Cardiac septum (tissue), 1 donor: ENCODE measurements at regions of chrX and their contacts with region 1.

Region 1: DNA sequence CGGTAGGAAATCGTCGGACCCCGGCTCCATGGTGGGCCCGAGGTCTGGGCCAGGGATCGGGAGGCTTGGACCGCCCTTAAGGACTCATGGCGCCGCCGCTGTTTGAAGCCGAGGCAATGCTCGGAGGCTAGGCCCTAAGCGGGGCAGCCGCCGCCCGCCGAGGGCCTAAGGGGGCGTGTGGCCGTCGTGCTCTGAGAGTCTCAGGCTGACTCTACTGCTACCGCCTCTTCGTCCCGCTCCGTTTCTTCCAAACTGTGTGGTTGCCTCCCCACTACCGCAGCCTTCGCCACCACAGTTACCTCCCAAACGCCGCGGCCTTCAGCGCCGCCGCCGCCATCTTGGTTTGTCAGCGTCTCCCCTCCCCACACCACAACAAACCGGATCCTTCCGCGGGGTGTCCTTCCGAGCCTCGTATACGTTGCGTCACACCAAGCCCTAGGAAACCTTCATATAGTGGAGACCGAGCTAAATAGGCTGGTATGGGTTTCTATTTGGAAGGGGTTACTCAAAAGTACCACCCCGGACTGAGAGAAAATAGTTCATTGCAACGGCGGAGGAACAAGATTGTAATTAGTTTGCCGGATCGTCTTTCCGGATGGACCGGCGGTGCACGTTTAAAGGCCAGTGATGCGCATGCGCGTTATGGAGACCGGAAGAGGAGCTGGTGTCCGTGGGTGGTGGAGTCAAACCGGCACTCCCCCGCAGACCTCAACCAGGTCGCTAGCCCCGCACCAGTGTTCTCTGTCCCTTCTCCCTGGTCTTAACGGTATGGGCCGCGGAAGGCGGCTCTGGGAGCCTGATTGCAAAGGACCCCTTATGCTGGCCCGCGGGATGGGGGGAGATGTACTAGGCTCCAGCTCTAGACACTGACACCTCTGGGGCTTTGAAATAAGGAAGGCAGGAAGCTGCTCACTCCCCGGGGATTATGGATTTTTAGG is at the start of gene KDM5C:
- DNase-seq: peak; percentile 97
- total RNA-seq, gene KDM5C: 57.7 TPM

Region 2: GRCh38 chrX:52852110-52852865 is 372.8 kb before region 1 on chrX:
- intact Hi-C with region 1: no loop called
- DNase-seq: no peak

Region 3: DNA sequence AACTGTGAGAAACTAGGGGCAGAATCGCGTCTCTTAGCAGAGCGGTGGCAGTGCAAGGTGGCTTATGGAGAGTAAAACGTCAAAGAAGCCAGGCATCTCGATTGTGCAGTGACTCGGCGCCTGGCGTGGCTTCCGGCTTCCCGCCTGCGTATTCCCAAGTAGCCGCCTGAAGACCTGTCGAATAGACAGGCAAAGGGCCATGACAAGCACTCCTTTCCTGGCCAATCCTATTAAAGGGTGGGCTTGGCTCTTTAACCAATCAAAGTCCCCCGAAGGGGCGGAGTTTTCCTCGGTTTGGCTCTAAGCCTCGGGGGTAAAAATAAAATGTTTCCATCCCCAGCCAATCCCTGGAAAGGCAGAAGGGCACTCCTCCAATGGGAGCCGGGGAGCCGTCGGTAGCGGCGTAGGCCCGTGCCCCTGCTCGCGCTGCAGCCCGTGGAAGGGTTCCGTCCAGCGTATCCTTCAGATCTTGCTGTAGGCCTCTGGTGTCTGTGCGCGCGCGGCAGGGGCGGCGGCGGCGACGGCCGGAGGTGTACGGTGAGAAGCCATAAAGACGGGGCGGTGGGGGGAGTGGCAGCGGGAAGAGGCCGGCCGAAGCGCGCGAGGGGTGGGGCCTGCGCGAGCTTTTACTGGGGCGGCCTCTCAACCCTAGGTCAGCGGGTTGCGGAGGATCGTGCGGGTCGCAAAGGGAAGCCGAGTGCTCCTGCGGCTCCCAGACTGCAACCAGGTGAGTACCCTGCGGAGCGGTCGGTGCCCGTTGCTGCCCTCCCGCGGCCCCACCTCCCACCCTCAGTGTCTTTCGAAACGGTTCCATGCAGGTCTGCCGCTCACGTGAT is 131.2 kb before region 1 on chrX and contains the start of gene KANTR:
- intact Hi-C with region 1: loop called (anchors 10 kb)
- DNase-seq: peak; percentile 89
- total RNA-seq, gene KANTR: 7.2 TPM

Region 4: DNA sequence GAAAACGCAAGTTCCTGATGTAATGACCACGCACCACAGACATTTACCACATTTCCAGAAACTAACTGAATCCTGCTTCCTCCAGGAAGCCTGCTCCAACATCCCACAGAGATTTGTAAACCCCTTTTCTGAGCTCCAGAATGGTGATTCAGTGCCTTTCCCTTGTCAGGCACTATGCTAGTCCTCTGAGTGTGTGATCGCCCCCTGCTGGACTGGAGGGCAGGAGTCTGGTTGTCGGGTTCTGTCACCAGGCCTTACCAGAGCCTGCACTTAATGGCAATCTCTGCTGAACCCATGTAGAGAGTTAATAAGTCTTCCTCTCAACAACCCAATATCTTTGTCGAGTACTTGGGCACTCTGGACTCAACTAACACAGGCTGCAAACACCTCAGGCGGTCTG is 14.3 kb after region 1 on chrX:
- intact Hi-C with region 1: no loop called
- DNase-seq: no peak

Region 5: DNA sequence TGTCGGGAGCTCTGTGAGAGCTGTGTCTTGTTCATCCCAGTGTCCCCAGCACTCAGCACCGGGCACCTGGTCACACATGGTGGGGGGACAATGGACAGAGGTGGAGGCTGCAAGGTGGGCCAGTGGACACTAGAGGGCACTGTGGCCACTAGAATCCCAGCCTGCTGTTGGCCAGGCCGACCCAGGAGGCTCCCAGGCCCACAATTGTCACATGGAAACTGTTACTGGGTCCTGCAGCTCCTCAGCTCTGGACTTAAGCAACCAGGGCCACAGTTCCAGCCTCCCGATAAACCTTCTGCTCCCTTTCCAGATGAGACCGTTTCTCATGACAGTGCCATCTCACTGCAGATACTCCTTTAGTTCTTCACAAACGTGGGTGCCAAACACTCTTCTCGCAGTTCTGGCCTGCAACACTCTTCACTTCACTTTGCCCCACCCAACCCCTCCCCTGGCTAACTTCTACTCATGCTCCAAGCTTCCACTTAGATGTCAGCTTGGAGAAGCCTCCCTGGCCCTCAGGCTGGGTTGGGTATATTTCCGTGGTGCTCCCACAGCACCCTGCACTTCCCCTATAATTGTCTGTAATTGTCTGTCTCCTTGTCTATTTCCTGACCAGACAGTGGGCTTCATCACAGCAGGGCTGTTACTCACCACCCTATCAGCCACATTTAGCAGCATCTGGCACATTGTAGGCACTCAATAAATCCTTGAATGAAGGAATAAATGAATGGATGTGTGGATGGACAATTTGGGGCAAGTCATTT is 59.7 kb after region 1 on chrX:
- intact Hi-C with region 1: no loop called
- DNase-seq: peak; percentile 83

Region 6: DNA sequence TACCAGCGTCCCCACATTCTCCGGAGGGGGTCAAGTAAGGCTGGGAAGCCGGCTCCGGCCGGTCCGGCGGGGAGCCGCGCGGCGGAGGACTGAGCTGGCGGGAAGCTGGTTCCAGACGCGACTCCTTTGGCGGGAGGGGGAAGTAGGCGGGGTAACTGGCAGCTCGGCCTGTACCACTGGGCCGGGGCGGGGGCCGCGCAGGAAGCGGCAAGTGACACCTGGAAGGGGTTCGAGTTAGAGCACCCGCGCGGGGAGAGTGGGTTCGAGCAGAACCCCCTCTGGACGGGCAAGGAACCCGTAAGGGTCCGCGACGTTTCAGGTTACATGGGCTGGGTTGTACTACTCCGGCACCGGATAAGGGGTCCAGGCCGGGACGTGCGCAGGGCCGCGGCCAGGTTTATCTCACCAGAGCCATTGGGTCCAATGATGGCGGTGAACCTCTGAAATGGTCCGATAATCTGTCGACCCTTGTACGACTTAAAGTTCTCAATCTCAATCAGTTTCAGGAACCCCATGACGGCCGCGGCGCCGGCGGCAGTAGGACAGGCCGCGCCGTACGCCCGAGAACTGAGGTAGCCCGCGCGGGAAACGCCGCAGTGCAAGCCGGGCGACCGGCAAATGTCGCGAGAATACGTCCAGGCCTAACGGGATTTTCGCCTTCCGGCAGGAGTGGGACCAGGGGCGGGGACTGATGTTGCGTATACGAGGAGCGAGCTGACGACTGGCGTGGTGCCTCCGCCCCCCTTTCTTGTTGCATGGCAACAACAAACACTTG is 197.1 kb after region 1 on chrX and contains the start of gene SMC1A:
- intact Hi-C with region 1: loop called (anchors 5 kb)
- DNase-seq: peak; percentile 99
- total RNA-seq, gene SMC1A: 50.8 TPM

Region 7: DNA sequence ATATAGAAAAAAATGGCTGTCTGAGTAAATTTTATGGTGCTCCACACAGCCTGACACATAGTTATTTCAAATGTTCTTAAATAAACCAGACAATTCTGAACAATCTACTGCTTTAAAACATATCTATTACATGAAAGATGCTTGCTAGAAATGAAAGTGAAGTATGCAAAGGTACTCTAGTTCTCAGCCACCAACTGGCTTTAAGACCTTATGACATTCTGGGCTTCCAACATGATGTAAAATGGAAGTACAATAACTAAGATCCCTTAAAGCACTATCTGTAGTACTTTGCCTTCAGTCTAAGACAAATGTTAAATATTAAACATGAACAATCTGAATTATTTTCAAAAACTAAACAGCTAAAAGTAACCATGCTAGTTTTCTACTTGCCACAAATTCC is 444.1 kb after region 1 on chrX:
- intact Hi-C with region 1: no loop called
- DNase-seq: no peak